ENCODE measurements at regions of chr14 and their contacts with region 1.

Region 1: DNA sequence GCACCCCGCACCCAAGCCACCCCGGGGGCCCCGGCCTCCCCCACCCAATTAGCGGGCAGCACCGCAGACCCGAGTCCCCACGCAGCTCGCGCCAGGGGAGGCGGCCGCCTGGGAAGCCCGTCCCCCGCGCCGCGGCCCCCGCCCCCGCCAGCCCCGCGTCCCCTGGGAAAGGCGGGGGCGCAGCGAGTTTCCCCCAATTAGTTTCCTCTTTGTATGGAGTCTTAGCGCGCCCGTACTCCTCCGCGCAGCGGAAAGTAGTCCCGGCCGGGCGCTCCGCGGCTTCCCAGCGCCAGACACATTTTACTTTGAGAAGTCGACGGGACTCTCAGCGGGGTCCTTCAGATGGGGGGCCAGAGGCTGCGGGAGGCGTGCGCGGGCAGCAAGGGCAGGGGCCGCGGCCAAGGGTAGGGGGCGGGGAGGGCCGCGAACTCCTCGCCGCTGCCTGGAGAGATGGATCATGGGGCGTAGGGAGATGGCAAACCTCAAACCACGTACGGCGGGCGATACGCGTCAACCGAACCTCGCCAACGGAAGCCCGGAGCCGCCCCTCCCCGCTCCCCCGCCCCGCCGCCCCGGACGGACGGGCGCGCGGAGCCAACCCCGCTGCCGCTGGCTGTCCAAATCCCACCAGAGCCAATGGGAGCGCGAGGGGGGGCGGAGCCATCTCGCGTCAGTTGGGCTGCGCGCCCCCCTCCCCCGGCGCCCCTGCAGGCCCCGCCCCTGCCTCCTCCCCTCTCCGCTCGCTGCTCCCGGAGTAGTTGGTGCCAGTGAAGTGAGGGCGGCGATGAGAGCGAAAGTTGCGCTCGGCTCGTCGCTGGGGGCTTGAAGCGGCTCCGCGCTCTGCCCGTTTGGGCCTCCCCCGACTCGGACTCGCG is at the start of gene RCOR1:
- DNase-seq: peak; percentile 94
- H3K4me3 ChIP-seq: peak within 1 kb of the TSS; percentile 81
- H3K27ac ChIP-seq: peak within 1 kb of the TSS; percentile 98
- H3K27me3 ChIP-seq: no peaks in the 10 kb centered on the region
- CTCF ChIP-seq: no peak
- polyA plus RNA-seq, gene RCOR1: 14.4 and 16.7 TPM in 2 replicates

Region 2: DNA sequence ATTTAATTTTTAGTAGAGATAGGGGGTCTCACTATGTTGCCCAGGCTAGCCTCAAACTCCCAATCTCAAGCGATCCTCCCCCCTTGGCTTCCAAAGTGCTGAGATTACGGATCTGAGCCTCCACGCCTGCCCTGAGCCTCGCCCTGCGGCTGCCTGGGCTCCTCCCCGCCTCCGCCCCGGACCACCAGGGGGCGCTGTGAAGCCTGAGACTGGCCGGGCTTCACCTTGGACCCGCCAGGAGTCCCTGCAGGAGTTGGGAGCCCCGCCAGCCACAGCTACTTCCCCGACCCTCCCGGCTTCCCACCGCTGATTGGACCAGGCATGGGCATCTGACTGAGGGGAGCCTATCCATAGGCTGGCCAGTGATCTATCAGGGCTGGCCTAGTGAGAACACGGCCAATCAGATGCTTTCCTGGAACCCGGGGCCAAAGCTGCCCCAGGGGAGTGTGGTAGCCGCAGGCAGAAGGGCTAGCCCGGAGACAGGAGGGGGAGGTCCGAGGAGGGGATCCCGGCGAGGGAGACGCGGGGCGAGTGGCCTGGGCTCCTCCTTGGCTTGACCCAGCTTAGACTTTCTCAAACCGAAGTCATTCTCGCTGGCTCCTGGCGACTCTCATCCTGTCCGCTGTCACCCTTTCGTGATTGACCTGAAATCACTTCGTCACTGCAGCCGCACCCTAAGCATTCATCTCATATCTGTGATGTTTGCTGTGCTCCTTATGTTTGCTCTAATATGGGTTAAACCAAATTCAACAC is 67.5 kb before region 1 on chr14:
- CTCF ChIA-PET with region 1: interaction called, 24 read pairs
- POLR2A ChIA-PET with region 1: interaction called, 13 read pairs
- DNase-seq: peak; percentile 95
- H3K4me3 ChIP-seq: peak overlapping the region; percentile 65
- H3K27ac ChIP-seq: peak overlapping the region; percentile 61
- H3K27me3 ChIP-seq: no peaks in the 10 kb centered on the region
- CTCF ChIP-seq: peak; percentile 94

Region 3: GRCh38 chr14:102608064-102608446 is 15.9 kb after region 1 on chr14:
- CTCF ChIA-PET with region 1: interaction called, 26 read pairs
- POLR2A ChIA-PET with region 1: no interaction called
- DNase-seq: no peak
- H3K4me3 ChIP-seq: no peak overlapping the region
- H3K27ac ChIP-seq: no peak overlapping the region
- H3K27me3 ChIP-seq: no peaks in the 10 kb centered on the region
- CTCF ChIP-seq: no peak

Region 4: GRCh38 chr14:102616799-102617198 is 24.7 kb after region 1 on chr14:
- CTCF ChIA-PET with region 1: interaction called, 15 read pairs
- POLR2A ChIA-PET with region 1: no interaction called
- DNase-seq: no peak
- H3K4me3 ChIP-seq: no peak overlapping the region
- H3K27ac ChIP-seq: no peak overlapping the region
- H3K27me3 ChIP-seq: no peaks in the 10 kb centered on the region
- CTCF ChIP-seq: no peak

Region 5: DNA sequence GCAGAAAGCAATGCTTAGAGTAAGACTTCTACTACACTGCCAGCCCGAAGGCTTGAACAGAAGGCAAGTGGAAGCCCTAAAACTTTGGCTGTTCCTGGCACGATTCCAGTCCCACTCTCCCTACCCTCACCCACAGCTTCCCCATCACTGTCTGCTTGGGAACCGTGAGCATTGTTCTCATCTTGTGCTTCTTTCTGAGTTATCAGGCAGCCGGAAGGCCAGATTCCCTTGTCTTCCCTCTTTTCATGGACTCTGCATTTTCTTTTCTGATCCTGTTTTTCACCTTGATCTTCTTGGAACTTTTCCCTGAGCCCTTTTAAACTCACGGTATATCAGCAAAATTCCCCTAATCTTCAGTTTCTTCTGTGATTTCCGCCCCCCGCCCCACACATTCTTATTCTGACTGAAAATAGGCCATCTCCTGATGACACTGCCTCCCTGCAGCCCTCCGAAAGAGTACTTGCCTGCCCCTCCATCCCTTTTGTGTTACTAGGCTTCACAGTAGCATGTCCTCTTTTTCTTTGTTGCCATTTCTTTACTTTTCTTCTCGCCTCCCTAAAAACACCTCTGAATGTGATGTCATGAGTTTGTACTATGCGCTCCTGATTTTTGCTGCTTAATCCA is 30.2 kb after region 1 on chr14:
- CTCF ChIA-PET with region 1: interaction called, 15 read pairs
- POLR2A ChIA-PET with region 1: no interaction called
- DNase-seq: no peak
- H3K4me3 ChIP-seq: no peak overlapping the region
- H3K27ac ChIP-seq: no peak overlapping the region
- H3K27me3 ChIP-seq: no peaks in the 10 kb centered on the region
- CTCF ChIP-seq: no peak

Region 6: DNA sequence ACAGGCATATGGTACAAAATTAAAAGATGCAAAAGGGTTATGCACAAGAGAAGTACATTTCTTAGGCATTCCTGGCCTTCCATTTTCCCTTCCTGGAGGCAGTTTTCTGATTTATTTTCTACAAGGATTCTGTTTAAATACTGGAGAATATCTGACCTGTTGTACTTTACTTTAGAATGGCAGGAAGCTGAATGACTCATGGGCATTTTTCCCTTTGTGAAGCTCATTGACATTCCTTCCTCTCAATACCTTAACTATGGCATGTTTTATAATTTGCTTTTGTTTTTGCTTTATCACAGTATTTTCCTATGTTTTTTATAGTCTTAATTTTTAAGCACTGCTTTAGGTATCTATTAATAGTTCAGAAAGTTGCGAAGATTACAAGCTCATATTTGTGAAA is 63.0 kb after region 1 on chr14:
- CTCF ChIA-PET with region 1: interaction called, 10 read pairs
- POLR2A ChIA-PET with region 1: interaction called, 3 read pairs
- DNase-seq: no peak
- H3K4me3 ChIP-seq: no peak overlapping the region
- H3K27ac ChIP-seq: no peak overlapping the region
- H3K27me3 ChIP-seq: no peaks in the 10 kb centered on the region
- CTCF ChIP-seq: no peak